KBM-7 (cell line): ENCODE measurements at regions of chr2 and their contacts with region 1.

Region 1: GRCh38 chr2:30165050-30165520 is 18.3 kb downstream of the YPEL5 start:
- DNase-seq: peak; percentile 89

Region 2: GRCh38 chr2:29698216-29698615 is 466.9 kb before region 1 on chr2:
- in situ Hi-C with region 1: no loop called
- DNase-seq: no peak

Region 3: GRCh38 chr2:30686000-30686399 is 520.9 kb after region 1 on chr2:
- in situ Hi-C with region 1: loop called (anchors 25 kb)
- DNase-seq: no peak